B cell (primary cell): ENCODE measurements at regions of chr17 and their contacts with region 1.

Region 1: GRCh38 chr17:48908047-48908843 is at the start of gene UBE2Z:
- DNase-seq: peak; percentile 96
- ATAC-seq: peak; percentile 90
- H3K4me3 ChIP-seq: peak within 1 kb of the TSS; percentile 36 to 79 (median 72)
- H3K4me3 Mint-ChIP-seq: peak within 1 kb of the TSS; percentile 95
- H3K27ac ChIP-seq: peak within 1 kb of the TSS; percentile 78 to 82
- H3K27ac Mint-ChIP-seq: peak within 1 kb of the TSS; percentile 99
- H3K4me1 ChIP-seq: peaks cover 26 to 30% of the 10 kb centered on the region in 2 donors
- H3K4me1 Mint-ChIP-seq: peaks cover 45% of the 10 kb centered on the region
- H3K27me3 ChIP-seq: no peaks in the 10 kb centered on the region
- H3K27me3 Mint-ChIP-seq: no peaks in the 10 kb centered on the region
- CTCF ChIP-seq: no peak
- total RNA-seq, gene UBE2Z: 121 and 122 TPM in 2 replicates

Region 2: GRCh38 chr17:48107168-48108132 is 800.8 kb before region 1 on chr17 and contains the start of gene SNX11:
- CTCF ChIA-PET with region 1: no interaction called
- POLR2A ChIA-PET with region 1: no interaction called
- intact Hi-C with region 1: loop called (anchors 10 kb)
- DNase-seq: peak; percentile 94
- ATAC-seq: peak; percentile 78
- H3K4me3 ChIP-seq: peak within 1 kb of the TSS; percentile 71 to 96 (median 79)
- H3K4me3 Mint-ChIP-seq: peak within 1 kb of the TSS; percentile 91
- H3K27ac ChIP-seq: peak within 1 kb of the TSS; percentile 88 to 94
- H3K27ac Mint-ChIP-seq: peak within 1 kb of the TSS; percentile 97
- H3K4me1 ChIP-seq: peaks cover 46 to 61% of the 10 kb centered on the region in 2 donors
- H3K4me1 Mint-ChIP-seq: peaks cover 58% of the 10 kb centered on the region
- H3K27me3 ChIP-seq: no peaks in the 10 kb centered on the region
- H3K27me3 Mint-ChIP-seq: no peaks in the 10 kb centered on the region
- CTCF ChIP-seq: no peak
- total RNA-seq, gene SNX11: 42.0 and 47.1 TPM in 2 replicates

Region 3: DNA sequence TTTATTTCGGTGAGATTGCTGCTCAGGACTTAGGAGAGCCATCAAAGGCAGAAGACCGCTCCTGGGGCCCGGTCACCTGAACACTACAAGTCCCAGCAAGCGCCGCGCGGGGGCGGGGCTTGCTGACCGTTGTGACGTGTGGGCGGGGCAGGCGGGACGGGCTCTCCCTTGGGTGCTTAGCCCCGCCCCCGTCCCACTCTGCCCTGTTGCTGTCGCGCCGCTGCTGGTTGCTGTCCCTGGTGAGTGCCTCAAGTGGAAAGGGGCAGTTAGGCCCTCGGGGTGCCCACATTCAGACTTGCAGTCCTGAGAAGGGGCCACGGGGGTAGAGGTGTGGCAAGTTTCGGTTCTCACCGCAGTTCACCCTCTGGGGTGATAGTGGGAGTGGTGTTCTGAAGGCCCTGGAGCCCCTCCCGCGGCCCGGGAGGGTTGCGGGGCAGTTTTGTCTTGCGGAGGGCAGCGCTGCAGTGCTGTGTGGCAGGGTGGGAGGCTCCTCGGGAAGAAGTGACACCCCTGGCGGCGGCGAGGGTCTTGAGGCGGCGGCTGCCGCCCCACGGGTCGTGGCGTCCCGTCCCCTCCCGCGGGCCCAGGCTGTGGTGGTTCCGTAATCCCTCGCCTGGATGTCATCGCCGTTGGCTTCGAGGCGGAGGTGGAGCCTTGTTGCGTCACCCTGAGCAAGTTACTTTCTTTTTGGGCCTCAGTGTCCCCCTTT is 77.3 kb before region 1 on chr17 and contains the start of gene CALCOCO2:
- CTCF ChIA-PET with region 1: no interaction called
- POLR2A ChIA-PET with region 1: no interaction called
- intact Hi-C with region 1: loop called (anchors 5 kb)
- DNase-seq: peak; percentile 95
- ATAC-seq: peak; percentile 94
- H3K4me3 ChIP-seq: peak within 1 kb of the TSS; percentile 85 to 99 (median 90)
- H3K4me3 Mint-ChIP-seq: peak within 1 kb of the TSS; percentile 100
- H3K27ac ChIP-seq: peak within 1 kb of the TSS; percentile 93 to 95
- H3K27ac Mint-ChIP-seq: peak within 1 kb of the TSS; percentile 98
- H3K4me1 ChIP-seq: peaks cover 23 to 33% of the 10 kb centered on the region in 2 donors
- H3K4me1 Mint-ChIP-seq: peaks cover 39% of the 10 kb centered on the region
- H3K27me3 ChIP-seq: no peaks in the 10 kb centered on the region
- H3K27me3 Mint-ChIP-seq: peaks cover 6% of the 10 kb centered on the region
- CTCF ChIP-seq: no peak
- total RNA-seq, gene CALCOCO2: 139 and 148 TPM in 2 replicates

Region 4: DNA sequence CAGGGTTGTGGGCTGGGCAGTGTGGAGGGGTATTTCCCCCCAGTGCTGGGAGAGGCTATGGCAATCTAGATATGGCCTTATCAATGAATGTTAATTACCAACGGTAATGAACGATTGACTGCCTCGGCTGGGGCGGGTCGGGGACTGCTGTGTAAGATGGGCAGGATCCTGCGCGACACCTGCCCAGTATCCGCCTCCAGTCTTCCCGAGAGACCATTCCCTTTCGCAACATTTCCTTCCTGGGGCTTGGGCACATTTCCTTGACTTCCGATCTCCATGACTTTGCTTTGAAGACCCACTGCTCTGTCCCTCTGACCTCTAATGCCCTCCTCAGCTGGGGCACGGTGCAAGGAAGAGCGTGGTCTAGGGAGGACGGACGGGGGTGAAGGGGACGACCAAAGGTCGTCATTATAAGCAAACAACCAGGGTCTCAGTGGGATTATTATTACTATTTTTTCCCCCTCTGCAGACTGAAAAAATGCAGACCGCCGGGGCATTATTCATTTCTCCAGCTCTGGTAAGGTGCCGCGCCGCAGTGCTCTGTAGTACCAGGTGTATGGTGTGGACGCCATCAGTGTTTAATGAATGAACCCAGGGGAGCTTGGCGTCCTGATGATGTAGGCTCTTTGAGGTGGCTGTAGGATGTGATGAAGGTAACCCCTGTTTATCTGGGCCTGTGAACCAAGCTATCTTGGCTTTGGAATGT is 15.2 kb before region 1 on chr17:
- CTCF ChIA-PET with region 1: interaction called, 10 read pairs
- POLR2A ChIA-PET with region 1: interaction called, 30 read pairs
- intact Hi-C with region 1: loop called (anchors 1 kb)
- DNase-seq: no peak
- ATAC-seq: no peak
- H3K4me3 ChIP-seq: peak overlapping the region; percentile 31 to 85 (median 75)
- H3K4me3 Mint-ChIP-seq: peak overlapping the region; percentile 95
- H3K27ac ChIP-seq: peak overlapping the region; percentile 88
- H3K27ac Mint-ChIP-seq: peak overlapping the region; percentile 93
- H3K4me1 ChIP-seq: peaks cover 17 to 23% of the 10 kb centered on the region in 2 donors
- H3K4me1 Mint-ChIP-seq: peaks cover 23% of the 10 kb centered on the region
- H3K27me3 ChIP-seq: no peaks in the 10 kb centered on the region
- H3K27me3 Mint-ChIP-seq: no peaks in the 10 kb centered on the region
- CTCF ChIP-seq: no peak

Region 5: DNA sequence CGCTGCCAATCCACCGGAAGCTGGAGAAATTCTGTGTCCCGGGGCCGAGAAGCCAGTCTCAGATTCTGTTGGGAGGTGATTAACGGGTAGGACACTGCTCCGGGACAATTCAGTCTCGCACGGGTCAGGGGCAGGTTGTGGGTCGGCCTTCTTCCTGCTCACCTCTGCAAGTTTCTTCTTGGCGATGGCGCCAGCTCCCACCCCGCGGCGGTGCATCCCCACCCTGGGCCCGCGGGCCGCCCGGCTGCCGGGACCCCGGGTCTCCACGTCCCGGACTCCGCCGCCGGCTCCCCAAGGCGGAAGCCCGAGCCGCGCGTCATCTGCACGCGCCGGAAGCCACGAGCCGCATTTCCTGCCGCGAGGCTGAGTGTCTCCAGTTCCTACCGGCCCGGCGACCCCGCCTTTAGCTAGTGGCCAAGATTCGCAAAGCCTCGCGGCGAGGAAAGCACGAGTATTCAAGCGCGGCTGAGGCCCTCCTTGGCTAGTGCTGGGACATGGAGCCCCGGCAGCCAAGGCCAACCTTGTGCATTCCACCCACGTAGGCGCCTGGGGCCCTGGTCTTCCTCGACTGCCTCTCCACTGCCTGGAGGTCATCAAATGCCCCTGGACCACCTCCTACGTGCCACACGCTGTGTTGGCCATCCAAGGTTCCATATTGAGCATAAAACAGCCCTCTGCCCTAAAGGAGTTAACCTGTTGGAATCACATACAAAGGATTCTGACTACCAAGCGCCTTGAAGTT is 36.4 kb after region 1 on chr17 and contains the start of gene SNF8:
- CTCF ChIA-PET with region 1: no interaction called
- POLR2A ChIA-PET with region 1: interaction called, 16 read pairs
- intact Hi-C with region 1: loop called (anchors 2 kb)
- DNase-seq: peak; percentile 93
- ATAC-seq: peak; percentile 92
- H3K4me3 ChIP-seq: peak within 1 kb of the TSS; percentile 80 to 99 (median 91)
- H3K4me3 Mint-ChIP-seq: peak within 1 kb of the TSS; percentile 93
- H3K27ac ChIP-seq: peak within 1 kb of the TSS; percentile 87 to 97
- H3K27ac Mint-ChIP-seq: peak within 1 kb of the TSS; percentile 93
- H3K4me1 ChIP-seq: peaks cover 12 to 21% of the 10 kb centered on the region in 2 donors
- H3K4me1 Mint-ChIP-seq: peaks cover 15% of the 10 kb centered on the region
- H3K27me3 ChIP-seq: no peaks in the 10 kb centered on the region
- H3K27me3 Mint-ChIP-seq: no peaks in the 10 kb centered on the region
- CTCF ChIP-seq: no peak
- total RNA-seq, gene SNF8: 77.5 and 81.9 TPM in 2 replicates